Colonic mucosa (tissue), 4 donors: ENCODE measurements at regions of chr5 and their contacts with region 1.

Region 1: DNA sequence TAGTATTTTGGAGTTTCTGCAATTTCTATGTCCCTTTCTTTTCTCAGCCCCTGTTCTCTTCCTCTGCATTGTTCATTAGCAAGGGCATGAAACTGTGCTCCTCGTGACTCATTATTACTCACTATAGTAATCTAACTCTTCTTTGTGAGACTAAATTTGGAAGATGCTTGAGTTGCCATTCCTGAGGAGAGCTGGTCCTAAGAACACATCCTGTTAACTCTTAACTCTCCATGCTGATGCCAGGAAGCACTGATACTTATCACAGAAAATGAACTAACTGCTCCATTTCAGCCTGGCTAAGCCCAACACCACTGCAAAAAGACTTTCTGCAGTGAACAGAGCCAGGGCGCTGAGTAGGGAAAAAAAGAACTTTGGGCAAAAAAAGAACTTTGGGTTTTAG is 10.6 kb upstream of the CSNK1A1 start:
- DNase-seq: no peak
- H3K4me3 ChIP-seq: no peak overlapping the region
- H3K27ac ChIP-seq: peak overlapping the region; percentile 70
- H3K4me1 ChIP-seq: no peaks in the 10 kb centered on the region
- H3K27me3 ChIP-seq: no peaks in the 10 kb centered on the region
- CTCF ChIP-seq: no peak

Region 2: GRCh38 chr5:149381987-149382340 is 179.9 kb before region 1 on chr5:
- intact Hi-C with region 1: loop called (anchors 2 kb)
- DNase-seq: peak; percentile 81
- H3K4me3 ChIP-seq: no peak overlapping the region
- H3K27ac ChIP-seq: peak overlapping the region; percentile 41
- H3K4me1 ChIP-seq: no peaks in the 10 kb centered on the region
- H3K27me3 ChIP-seq: no peaks in the 10 kb centered on the region
- CTCF ChIP-seq: peak; percentile 83

Region 3: DNA sequence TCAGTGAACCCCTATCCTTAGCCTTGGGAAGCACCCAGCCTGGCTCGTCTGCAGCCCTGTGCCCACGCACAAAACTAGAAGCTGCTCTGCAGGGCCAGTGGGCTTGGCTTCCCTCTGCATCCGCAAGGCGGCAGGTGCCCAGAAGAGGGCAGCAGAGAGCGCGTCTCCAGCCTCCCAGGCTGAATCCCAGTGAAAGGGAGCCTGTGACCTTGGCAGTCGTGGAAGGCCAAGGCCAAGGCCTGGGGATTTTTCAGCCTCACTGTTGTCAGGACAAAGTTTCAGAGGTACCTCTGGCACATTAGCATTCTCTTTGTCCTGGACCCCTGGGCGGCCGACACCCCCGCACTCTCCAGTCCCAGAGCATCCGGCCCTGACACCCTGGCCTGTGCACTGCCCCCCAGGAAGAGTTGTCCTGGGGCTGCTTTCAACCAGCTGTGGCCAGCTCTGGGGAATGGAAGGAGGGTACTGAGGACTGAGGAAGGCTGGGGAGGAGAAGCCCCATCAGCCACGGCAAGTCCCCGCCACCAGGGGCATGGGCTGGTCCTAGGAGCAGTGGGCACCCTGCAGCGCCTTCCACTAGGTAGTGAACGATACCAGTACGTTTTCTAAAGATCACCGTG is 119.2 kb before region 1 on chr5:
- intact Hi-C with region 1: loop called (anchors 5 kb)
- DNase-seq: peak; percentile 89
- H3K4me3 ChIP-seq: no peak overlapping the region
- H3K27ac ChIP-seq: peak overlapping the region; percentile 45
- H3K4me1 ChIP-seq: no peaks in the 10 kb centered on the region
- H3K27me3 ChIP-seq: no peaks in the 10 kb centered on the region
- CTCF ChIP-seq: peak; percentile 91